Transverse colon (tissue), 4 donors: ENCODE measurements at regions of chr3 and their contacts with region 1.

Region 1: DNA sequence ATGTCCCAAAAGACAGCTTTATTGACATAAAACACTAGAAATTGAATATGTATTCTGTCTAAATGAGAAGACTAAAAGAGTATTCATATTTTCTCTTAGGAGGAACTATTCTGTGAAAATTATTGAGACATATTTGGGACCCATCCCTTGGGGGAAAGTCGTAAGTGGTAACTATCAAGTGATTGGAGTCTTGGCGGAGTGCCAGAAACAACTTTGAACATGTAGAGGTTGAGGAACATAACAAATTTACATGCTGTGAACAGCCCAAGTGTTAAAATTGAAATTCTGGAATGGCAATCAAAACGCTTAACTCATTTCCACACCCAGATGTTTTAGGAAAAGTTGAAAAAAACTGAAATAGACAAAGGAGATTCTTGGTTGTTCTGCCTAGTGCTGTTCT is 1034.6 kb downstream of the NSUN3 start:
- DNase-seq: peak; percentile 7
- H3K4me3 ChIP-seq: no peak overlapping the region
- H3K27ac ChIP-seq: no peak overlapping the region
- H3K4me1 ChIP-seq: no peaks in the 10 kb centered on the region
- H3K27me3 ChIP-seq: no peaks in the 10 kb centered on the region
- CTCF ChIP-seq: no peak
- EP300 ChIP-seq: no peak
- POLR2A ChIP-seq: no peak

Region 2: DNA sequence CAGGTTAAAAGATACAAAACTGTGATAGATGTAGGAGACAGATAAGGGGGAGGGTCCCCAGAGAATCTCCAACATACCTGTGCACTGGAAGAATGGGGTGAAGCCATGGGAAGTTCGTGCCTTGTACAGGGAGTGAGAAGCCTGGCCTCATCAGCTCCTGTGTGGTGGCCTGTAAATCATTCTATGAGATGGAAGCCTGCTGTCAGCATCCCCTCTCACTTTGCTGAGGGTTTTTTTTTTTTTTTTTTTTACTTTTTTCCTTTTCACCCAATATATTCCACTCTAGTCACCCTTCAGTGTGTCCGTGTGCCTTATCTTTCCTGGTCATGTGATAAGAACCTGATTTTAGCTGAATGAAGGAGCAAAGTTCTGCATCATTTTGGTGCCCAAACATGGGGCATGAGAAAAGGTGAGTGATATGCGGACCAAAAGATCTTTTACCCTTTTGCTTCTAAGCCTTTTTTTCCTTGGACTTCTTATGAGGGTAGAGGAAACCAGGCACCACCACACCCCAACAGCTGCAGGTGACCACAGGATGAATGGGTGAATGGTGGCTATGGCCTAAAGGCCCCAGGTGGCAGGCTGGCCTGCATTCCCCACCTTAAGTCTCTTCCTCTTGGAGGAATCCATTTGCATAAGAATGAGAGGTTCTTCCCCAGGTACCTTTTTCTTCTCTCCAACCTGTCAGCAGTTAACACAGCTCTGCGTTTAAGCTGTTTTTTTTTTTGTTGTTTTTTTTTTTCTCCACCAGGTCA is 310.4 kb after region 1 on chr3:
- in situ Hi-C with region 1: no loop called
- intact Hi-C with region 1: no loop called
- DNase-seq: no peak
- H3K4me3 ChIP-seq: no peak overlapping the region
- H3K27ac ChIP-seq: no peak overlapping the region
- H3K4me1 ChIP-seq: no peaks in the 10 kb centered on the region
- H3K27me3 ChIP-seq: no peaks in the 10 kb centered on the region
- CTCF ChIP-seq: no peak
- EP300 ChIP-seq: no peak
- POLR2A ChIP-seq: no peak

Region 3: DNA sequence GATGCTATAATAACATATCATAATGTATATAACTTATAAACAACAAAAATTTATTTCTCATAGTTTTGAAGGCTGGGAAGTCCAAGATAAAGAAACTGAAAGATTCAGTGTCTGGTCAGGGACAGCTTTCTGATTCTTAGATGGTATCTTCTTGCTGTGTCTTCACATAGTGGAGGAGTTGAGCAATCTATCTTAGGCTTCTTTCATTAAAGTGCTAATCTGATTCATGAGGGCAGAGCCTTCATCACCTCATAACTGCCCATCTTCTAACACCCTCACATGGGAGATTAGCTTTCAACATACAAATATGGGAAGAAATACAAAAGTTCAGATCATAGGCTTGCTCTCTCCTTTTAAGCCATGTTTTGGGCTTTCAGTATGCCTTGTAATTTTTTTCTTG is 942.1 kb after region 1 on chr3:
- in situ Hi-C with region 1: no loop called
- intact Hi-C with region 1: no loop called
- DNase-seq: no peak
- H3K4me3 ChIP-seq: no peak overlapping the region
- H3K27ac ChIP-seq: no peak overlapping the region
- H3K4me1 ChIP-seq: no peaks in the 10 kb centered on the region
- H3K27me3 ChIP-seq: no peaks in the 10 kb centered on the region
- CTCF ChIP-seq: no peak
- EP300 ChIP-seq: no peak
- POLR2A ChIP-seq: no peak

Region 4: DNA sequence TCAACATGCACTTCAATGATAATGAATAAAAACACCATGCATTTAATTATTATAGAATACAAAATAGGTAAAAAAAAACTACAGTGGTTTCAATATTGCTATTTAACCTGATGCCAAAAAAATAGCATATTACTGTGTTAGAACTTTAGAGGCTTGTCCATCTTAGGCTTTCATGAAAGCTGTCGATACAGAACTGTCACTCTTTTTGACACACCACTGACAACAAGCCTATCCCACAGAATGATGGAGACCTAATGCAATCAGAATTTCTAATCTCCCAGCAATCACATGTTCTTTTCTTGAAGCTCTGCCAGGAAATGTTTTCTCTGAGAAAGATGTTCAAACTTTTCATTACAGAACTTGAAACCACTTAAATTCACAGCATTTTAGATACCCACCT is 1226.6 kb after region 1 on chr3:
- in situ Hi-C with region 1: no loop called
- intact Hi-C with region 1: loop called (anchors 10 kb)
- DNase-seq: no peak
- H3K4me3 ChIP-seq: no peak overlapping the region
- H3K27ac ChIP-seq: no peak overlapping the region
- H3K4me1 ChIP-seq: no peaks in the 10 kb centered on the region
- H3K27me3 ChIP-seq: no peaks in the 10 kb centered on the region
- CTCF ChIP-seq: no peak
- EP300 ChIP-seq: no peak
- POLR2A ChIP-seq: no peak